ENCODE measurements at regions of chr17 and their contacts with region 1.

Region 1: DNA sequence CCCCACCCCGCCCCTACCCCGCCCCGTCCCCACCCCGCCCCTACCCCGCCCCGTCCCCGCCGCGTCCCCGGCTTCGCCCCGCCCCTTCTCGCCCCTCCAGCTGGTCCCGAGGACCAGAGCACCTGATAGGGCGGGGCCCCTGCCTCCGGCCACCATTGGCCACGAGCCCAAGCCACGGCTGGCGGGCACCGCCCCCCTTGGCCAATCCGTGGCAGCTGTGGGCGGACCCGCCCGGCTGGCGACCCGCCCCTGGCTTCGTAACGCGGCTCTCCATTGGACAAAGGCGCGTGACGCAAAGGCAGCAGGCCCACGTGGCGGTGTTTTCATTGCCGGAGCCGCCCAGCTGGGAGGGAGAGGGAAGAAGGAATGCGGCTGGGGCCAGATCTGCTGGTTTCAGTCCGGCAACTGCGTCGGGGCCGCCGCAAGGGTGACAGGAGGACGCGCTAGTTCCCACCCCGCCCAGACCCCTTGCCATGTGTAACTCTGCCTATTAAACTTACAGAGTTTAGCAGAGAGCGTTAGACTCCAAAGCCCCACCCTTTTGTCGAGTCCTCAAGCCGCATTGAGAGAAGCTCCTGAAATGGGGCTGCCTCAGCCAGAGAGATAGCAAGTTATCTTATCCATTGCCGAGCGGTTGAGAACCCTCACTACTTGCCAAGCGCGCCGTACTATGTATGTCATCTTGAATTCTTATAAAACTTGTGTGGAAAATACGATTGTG is 403 bp upstream of the WIPI1 start:
- DNase-seq: peak; percentile 99
- ATAC-seq: peak; percentile 87 to 99 (median 93)
- H3K4me3 ChIP-seq: peak overlapping the region; percentile 36
- H3K4me3 Mint-ChIP-seq: peak overlapping the region; percentile 83
- H3K27ac ChIP-seq: peak overlapping the region; percentile 78
- H3K27ac Mint-ChIP-seq: peak overlapping the region; percentile 94 to 97
- H3K4me1 ChIP-seq: peaks cover 43% of the 10 kb centered on the region
- H3K4me1 Mint-ChIP-seq: peaks cover 67 to 69% of the 10 kb centered on the region in 2 donors
- H3K27me3 ChIP-seq: no peaks in the 10 kb centered on the region
- H3K27me3 Mint-ChIP-seq: no peaks in the 10 kb centered on the region
- CTCF ChIP-seq: no peak

Region 2: DNA sequence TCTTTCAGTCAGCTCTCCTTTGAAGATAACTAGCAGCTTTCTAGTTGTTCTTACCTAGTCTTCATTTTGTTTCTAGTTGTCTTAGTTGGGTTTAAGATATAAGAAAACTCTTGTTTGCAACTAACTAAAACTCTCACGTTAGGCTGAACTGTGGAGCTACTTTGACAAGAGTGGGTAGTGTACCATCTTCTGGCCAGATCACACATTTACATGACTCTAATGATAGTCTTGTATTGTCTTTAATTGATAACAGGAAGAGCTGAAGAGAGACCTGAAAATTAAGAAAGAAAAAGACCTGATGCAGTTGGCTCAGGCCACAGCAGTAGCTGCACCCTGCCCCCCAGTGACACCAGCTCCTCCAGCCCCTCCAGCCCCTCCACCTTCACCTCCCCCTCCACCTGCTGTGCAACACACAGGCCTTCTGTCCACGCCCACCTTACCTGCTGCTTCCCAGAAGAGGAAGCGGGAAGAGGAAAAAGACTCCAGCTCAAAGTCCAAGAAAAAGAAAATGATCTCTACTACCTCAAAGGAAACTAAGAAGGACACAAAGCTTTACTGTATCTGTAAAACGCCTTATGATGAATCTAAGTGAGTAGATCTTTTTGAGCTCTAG is 498.3 kb before region 1 on chr17:
- intact Hi-C with region 1: loop called (anchors 2 kb)
- DNase-seq: no peak
- ATAC-seq: no peak
- H3K4me3 ChIP-seq: no peak overlapping the region
- H3K4me3 Mint-ChIP-seq: no peak overlapping the region
- H3K27ac ChIP-seq: no peak overlapping the region
- H3K27ac Mint-ChIP-seq: peak overlapping the region; percentile 15 to 36
- H3K4me1 ChIP-seq: no peaks in the 10 kb centered on the region
- H3K4me1 Mint-ChIP-seq: peaks cover 0 to 8% of the 10 kb centered on the region in 2 donors
- H3K27me3 ChIP-seq: no peaks in the 10 kb centered on the region
- H3K27me3 Mint-ChIP-seq: no peaks in the 10 kb centered on the region
- CTCF ChIP-seq: no peak

Region 3: GRCh38 chr17:68057531-68057952 is 400.2 kb before region 1 on chr17:
- intact Hi-C with region 1: loop called (anchors 5 kb)
- DNase-seq: peak; percentile 21 to 60
- ATAC-seq: peak; percentile 62 to 84 (median 77)
- H3K4me3 ChIP-seq: no peak overlapping the region
- H3K4me3 Mint-ChIP-seq: no peak overlapping the region
- H3K27ac ChIP-seq: no peak overlapping the region
- H3K27ac Mint-ChIP-seq: no peak overlapping the region
- H3K4me1 ChIP-seq: no peaks in the 10 kb centered on the region
- H3K4me1 Mint-ChIP-seq: peaks cover 0 to 7% of the 10 kb centered on the region in 2 donors
- H3K27me3 ChIP-seq: no peaks in the 10 kb centered on the region
- H3K27me3 Mint-ChIP-seq: no peaks in the 10 kb centered on the region
- CTCF ChIP-seq: peak; percentile 61

Region 4: DNA sequence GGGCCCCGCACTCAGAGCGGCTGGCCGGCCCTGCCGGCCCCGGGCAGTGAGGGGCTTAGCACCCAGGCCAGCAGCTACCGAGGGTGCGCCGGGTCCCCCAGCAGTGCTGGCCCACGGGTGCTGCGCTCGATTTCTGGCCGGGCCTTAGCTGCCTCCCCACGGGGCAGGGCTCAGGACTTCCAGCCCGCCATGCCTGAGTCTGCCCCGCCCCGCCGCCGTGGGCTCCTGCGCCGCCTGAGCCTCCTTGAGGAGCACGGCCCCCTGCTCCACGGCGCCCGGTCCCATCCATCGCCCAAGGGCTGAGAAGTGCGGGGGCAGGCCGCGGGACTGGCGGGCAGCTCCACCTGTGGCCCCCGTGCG is 277.8 kb before region 1 on chr17:
- intact Hi-C with region 1: loop called (anchors 1 kb)
- DNase-seq: no peak
- ATAC-seq: no peak
- H3K4me3 ChIP-seq: no peak overlapping the region
- H3K4me3 Mint-ChIP-seq: no peak overlapping the region
- H3K27ac ChIP-seq: peak overlapping the region; percentile 75
- H3K27ac Mint-ChIP-seq: peak overlapping the region; percentile 95 to 97
- H3K4me1 ChIP-seq: peaks cover 56% of the 10 kb centered on the region
- H3K4me1 Mint-ChIP-seq: peaks cover 28 to 44% of the 10 kb centered on the region in 2 donors
- H3K27me3 ChIP-seq: no peaks in the 10 kb centered on the region
- H3K27me3 Mint-ChIP-seq: no peaks in the 10 kb centered on the region
- CTCF ChIP-seq: no peak

Region 5: GRCh38 chr17:68247445-68248198 is 210.1 kb before region 1 on chr17 and contains the start of gene AMZ2:
- intact Hi-C with region 1: loop called (anchors 5 kb)
- DNase-seq: peak; percentile 99
- ATAC-seq: peak; percentile 81 to 95 (median 83)
- H3K4me3 ChIP-seq: peak within 1 kb of the TSS; percentile 95
- H3K4me3 Mint-ChIP-seq: peak within 1 kb of the TSS; percentile 82
- H3K27ac ChIP-seq: peak within 1 kb of the TSS; percentile 100
- H3K27ac Mint-ChIP-seq: peak within 1 kb of the TSS; percentile 99 to 100
- H3K4me1 ChIP-seq: peaks cover 37% of the 10 kb centered on the region
- H3K4me1 Mint-ChIP-seq: peaks cover 34 to 37% of the 10 kb centered on the region in 2 donors
- H3K27me3 ChIP-seq: no peaks in the 10 kb centered on the region
- H3K27me3 Mint-ChIP-seq: no peaks in the 10 kb centered on the region
- CTCF ChIP-seq: no peak
- total RNA-seq, gene AMZ2: 87.0 to 131 (median 107) TPM

Region 6: DNA sequence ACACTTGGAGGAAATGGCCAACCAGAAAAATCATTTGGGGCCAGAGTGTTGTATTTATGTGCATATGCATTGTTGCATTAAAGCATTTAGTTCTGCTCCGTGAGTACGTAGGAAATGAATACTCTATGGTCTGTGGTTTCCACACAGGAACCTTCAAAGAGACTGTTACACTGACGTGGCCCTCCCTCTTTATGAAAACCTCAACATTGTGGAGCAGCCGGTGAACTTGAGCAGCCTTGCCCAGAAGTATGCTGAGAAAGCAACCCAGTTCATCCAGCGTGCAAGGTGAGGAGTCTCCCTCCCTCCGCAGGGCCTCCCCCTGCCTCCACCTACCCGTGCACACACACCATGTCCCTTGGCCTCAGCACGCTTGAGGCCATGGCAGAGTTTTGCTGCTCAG is 101.2 kb before region 1 on chr17:
- intact Hi-C with region 1: loop called (anchors 2 kb)
- DNase-seq: peak; percentile 53 to 89
- ATAC-seq: peak; percentile 91 to 96 (median 93)
- H3K4me3 ChIP-seq: peak overlapping the region; percentile 5
- H3K4me3 Mint-ChIP-seq: peak overlapping the region; percentile 84
- H3K27ac ChIP-seq: peak overlapping the region; percentile 67
- H3K27ac Mint-ChIP-seq: peak overlapping the region; percentile 86 to 93
- H3K4me1 ChIP-seq: peaks cover 68% of the 10 kb centered on the region
- H3K4me1 Mint-ChIP-seq: peaks cover 65 to 68% of the 10 kb centered on the region in 2 donors
- H3K27me3 ChIP-seq: no peaks in the 10 kb centered on the region
- H3K27me3 Mint-ChIP-seq: no peaks in the 10 kb centered on the region
- CTCF ChIP-seq: no peak

Region 7: DNA sequence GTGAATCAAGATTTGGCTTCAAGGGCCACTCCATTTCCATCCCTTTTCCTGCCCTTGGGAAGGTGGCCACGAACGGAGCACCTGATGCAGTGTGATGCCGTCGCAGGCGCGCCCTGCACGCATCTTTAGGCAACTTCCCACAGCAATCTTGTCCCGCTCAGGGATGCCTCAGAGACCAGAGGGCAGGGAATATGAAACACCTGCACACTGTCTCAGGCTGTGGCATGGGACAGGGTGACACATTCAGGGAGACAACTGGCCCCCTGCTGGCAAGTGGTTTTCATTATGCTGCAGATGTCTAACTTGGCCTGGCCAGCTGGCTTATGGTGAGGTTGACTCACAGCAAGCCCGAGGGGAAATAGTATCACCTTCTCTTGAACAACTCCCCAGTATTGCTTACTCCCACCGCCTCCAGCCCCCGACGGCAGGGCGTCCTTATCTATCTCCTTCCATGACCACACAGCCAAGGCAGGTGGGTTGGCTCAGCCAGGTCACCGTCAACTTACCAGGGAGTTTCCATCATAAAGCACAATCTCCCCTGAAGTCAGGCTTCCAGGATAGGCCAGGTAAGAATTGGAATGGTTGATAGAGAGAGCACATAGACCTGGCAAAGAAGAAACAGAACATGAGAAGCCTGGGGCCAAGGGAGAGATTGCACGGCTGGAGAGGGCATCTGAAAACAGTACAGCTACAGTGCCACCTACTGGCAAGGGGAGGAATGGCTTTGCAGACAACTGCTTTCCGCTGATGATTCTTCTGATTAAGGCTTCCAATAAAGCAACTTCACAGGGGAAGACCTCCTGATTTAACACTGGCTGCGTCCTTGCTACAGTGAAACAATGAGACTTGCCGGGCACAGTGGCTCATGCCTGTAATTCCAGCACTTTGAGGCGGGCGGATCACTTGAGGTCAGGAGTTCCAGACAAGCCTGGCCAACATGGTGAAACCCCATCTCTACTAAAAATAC is 21.5 kb before region 1 on chr17:
- intact Hi-C with region 1: no loop called
- DNase-seq: peak; percentile 78 to 94
- ATAC-seq: peak; percentile 80 to 90 (median 81)
- H3K4me3 ChIP-seq: no peak overlapping the region
- H3K4me3 Mint-ChIP-seq: peak overlapping the region; percentile 87
- H3K27ac ChIP-seq: no peak overlapping the region
- H3K27ac Mint-ChIP-seq: peak overlapping the region; percentile 96
- H3K4me1 ChIP-seq: peaks cover 32% of the 10 kb centered on the region
- H3K4me1 Mint-ChIP-seq: peaks cover 42 to 56% of the 10 kb centered on the region in 2 donors
- H3K27me3 ChIP-seq: no peaks in the 10 kb centered on the region
- H3K27me3 Mint-ChIP-seq: no peaks in the 10 kb centered on the region
- CTCF ChIP-seq: peak; percentile 83

Region 8: DNA sequence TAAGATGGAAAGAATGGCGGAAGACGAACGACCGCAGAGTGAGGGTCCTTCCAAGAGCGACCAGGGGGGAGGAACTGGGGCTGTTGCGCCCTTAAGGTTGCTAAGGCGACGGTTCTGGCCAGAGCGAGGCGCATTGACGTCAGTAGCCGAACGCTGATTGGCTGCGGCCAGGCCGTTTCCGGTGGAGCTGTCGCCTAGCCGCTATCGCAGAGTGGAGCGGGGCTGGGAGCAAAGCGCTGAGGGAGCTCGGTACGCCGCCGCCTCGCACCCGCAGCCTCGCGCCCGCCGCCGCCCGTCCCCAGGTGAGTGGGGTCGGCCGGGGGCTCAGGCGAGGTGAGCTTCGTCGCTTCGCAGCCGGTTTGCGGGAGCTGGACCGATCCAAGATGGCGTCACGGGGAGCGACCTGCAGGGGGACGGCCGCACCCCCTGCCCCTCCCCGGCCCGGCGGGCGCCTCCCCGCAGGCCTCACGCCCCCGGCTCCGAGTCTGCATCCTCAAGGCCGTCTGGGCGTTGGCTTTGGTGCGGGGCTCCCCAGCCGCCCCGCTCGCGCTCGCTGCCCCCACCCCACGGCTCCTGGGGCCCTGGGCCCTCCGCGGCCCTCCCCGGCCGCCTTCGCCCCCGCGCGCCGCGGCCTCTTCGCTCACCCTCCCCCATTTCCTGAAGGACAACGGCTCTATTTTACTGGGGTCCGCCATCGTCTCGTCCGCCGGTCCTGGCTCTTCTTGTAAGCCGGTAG is 54.7 kb after region 1 on chr17 and contains the start of gene PRKAR1A:
- intact Hi-C with region 1: loop called (anchors 1 kb)
- DNase-seq: peak; percentile 97 to 98
- ATAC-seq: peak; percentile 73 to 91 (median 84)
- H3K4me3 ChIP-seq: peak within 1 kb of the TSS; percentile 90
- H3K4me3 Mint-ChIP-seq: peak within 1 kb of the TSS; percentile 99
- H3K27ac ChIP-seq: peak within 1 kb of the TSS; percentile 100
- H3K27ac Mint-ChIP-seq: peak within 1 kb of the TSS; percentile 98
- H3K4me1 ChIP-seq: peaks cover 14% of the 10 kb centered on the region
- H3K4me1 Mint-ChIP-seq: peaks cover 72 to 75% of the 10 kb centered on the region in 2 donors
- H3K27me3 ChIP-seq: no peaks in the 10 kb centered on the region
- H3K27me3 Mint-ChIP-seq: no peaks in the 10 kb centered on the region
- CTCF ChIP-seq: no peak
- total RNA-seq, gene PRKAR1A: 215 to 267 (median 234) TPM

Measured in natural killer cell (primary cell).